ENCODE measurements at regions of chrX and their contacts with region 1.

Region 1: GRCh38 chrX:8743126-8743732 is 11.3 kb upstream of the ANOS1 start:
- DNase-seq: peak; percentile 66
- H3K4me3 Mint-ChIP-seq: no peak overlapping the region
- H3K27ac Mint-ChIP-seq: no peak overlapping the region
- H3K4me1 Mint-ChIP-seq: no peaks in the 10 kb centered on the region
- H3K27me3 Mint-ChIP-seq: peaks cover 3% of the 10 kb centered on the region

Region 2: DNA sequence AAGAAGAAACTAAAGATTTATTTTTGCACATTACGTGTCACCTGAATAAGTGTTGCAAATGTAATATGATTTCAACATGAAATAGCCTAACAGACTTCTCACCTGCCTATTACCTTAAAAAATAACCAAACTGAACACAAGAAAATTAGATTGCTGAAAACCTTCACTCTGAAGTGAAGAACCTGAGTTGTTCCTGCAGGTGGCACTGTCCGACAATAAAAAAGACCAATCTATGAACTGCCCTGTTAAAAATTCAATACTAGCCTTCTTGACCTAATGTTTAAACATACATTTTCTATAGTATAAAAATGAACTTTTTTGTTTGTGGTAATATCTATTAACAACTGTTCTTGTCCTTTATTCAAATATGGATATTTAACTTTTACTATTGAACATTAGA is 746.8 kb before region 1 on chrX:
- CTCF ChIA-PET with region 1: interaction called, 3 read pairs
- intact Hi-C with region 1: loop called (anchors 1 kb)
- DNase-seq: peak; percentile 48
- H3K4me3 Mint-ChIP-seq: no peak overlapping the region
- H3K27ac Mint-ChIP-seq: no peak overlapping the region
- H3K4me1 Mint-ChIP-seq: no peaks in the 10 kb centered on the region
- H3K27me3 Mint-ChIP-seq: no peaks in the 10 kb centered on the region

Measured in activated naive CD4-positive, alpha-beta T cell treated with anti-CD3 and anti-CD28 coated beads for 36 hours (primary cell).